ENCODE measurements at regions of chr11 and their contacts with region 1.

Region 1: GRCh38 chr11:63738720-63739360 is 29.7 kb downstream of the ZFTA start:
- DNase-seq: peak; percentile 19
- ATAC-seq: peak; percentile 42; the same call in 2 of the 3 replicates
- H3K4me3 ChIP-seq: no peak overlapping the region
- H3K27ac ChIP-seq: no peak overlapping the region
- H3K4me1 ChIP-seq: no peaks in the 10 kb centered on the region
- H3K27me3 ChIP-seq: no peaks in the 10 kb centered on the region
- CTCF ChIP-seq: peak; percentile 81 to 90 (median 87)
- EP300 ChIP-seq: no peak
- POLR2A ChIP-seq: no peak
- RAD21 ChIP-seq: peak; percentile 73

Region 2: DNA sequence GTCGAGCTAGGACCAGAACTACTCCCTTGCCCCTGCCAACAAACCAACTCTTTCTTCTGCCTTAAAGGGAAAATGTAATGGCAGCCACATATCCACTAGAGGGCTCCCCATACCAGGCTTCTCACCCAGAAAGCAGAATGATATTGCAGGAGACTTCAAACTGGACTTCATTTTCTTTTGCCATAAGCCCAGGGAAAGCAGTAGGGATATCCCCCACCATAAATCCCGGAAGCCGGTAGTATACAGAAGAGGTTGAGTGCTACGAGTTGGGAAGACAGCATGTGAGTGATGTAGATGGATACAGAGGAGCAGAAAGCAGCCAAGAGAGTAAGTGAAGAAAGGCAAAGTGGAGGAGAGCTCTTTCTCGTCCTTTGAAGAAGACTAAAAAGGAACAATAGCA is 259.9 kb before region 1 on chr11:
- CTCF ChIA-PET with region 1: interaction called, 92 read pairs
- POLR2A ChIA-PET with region 1: no interaction called
- RAD21 ChIA-PET with region 1: interaction called, 18 read pairs
- SMC1A ChIA-PET with region 1: interaction called, 46 read pairs
- in situ Hi-C with region 1: loop called (anchors 5 kb)
- intact Hi-C with region 1: loop called (anchors 2 kb)
- DNase-seq: peak; percentile 23
- ATAC-seq: peak; percentile 83
- H3K4me3 ChIP-seq: no peak overlapping the region
- H3K27ac ChIP-seq: no peak overlapping the region
- H3K4me1 ChIP-seq: no peaks in the 10 kb centered on the region
- H3K27me3 ChIP-seq: no peaks in the 10 kb centered on the region
- CTCF ChIP-seq: peak; percentile 83 to 96 (median 89); a peak in 5 of 6 replicates
- EP300 ChIP-seq: no peak
- POLR2A ChIP-seq: no peak
- RAD21 ChIP-seq: peak; percentile 100

Region 3: DNA sequence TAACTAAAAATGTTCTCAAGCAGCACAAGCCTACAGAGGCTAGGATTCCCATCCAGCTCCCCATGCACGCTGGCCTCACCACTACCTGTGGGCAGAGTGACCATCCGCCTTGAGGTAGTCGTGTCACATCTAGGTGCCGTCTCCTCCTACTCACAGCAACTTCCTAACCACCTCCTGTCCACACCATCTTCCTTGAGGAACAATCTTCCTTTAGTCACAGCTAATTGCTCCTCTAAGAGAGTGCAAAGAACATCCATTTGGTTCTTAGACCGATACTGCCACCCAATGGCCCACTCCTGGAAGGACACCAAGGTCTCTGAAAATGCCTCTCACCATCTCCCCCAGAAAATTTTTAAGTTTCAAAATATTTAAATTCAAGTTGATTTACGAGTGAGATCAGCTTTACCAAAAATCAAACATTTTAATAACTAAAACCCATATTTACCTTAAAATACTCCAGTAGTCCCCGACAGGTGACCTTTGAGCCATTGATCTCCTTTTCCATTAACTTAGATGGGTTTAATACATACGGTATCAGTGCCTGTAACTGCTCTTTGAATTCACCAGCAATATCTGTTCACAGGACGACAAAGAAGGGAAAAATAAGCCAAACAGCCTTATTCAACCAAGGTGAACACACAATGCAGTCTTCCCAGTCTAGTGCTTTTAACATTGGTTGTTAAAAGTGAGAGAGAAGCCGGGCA is 102.9 kb before region 1 on chr11:
- CTCF ChIA-PET with region 1: interaction called, 131 read pairs
- POLR2A ChIA-PET with region 1: no interaction called
- RAD21 ChIA-PET with region 1: interaction called, 19 read pairs
- SMC1A ChIA-PET with region 1: interaction called, 30 read pairs
- in situ Hi-C with region 1: no loop called
- intact Hi-C with region 1: loop called (anchors 1 kb)
- DNase-seq: peak; percentile 20
- ATAC-seq: peak; percentile 82
- H3K4me3 ChIP-seq: no peak overlapping the region
- H3K27ac ChIP-seq: no peak overlapping the region
- H3K4me1 ChIP-seq: peaks cover 8% of the 10 kb centered on the region
- H3K27me3 ChIP-seq: no peaks in the 10 kb centered on the region
- CTCF ChIP-seq: peak; percentile 78 to 92 (median 79)
- EP300 ChIP-seq: no peak
- POLR2A ChIP-seq: no peak
- RAD21 ChIP-seq: peak; percentile 98

Region 4: DNA sequence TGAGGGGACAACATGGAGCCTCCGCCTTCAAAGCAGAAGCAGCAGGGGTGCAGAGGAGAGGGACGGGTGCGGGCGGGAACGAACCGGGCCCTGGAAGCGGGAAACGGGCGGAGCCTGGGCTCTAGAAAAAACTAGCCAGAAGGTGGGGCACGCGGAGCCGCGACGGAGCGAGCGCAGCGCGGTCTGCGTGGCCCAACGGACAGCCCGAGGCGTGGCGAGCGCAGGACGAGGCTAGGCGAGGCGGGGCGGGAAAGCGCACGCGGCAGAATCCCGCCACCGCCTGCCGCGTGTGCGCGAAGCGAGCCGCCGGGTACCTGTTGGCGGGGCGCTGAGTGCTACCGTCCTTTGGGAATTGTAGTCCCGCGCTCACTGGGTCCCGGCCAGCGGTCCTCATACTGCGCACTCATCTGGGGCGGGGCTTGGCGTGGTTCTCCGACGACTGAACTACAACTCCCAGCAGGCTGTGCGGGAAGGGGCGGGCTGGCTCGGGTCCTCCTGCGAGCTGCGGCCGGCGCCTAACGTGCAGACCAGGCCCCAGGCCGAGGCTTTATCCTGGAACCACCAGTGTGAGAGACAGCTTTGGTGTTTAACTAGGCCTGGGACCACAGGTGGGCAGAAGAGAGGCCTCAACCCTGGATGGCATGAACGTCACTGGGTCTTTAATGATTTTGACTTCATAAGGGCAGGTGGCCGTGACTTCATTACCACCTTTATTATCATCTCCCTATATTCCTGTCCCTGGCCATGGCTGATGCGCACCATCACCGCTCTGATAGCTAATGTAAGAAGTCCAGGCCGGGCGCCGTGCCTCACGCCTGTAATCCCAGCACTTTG is 67.3 kb before region 1 on chr11 and contains the start of gene ATL3:
- CTCF ChIA-PET with region 1: interaction called, 70 read pairs
- POLR2A ChIA-PET with region 1: interaction called, 3 read pairs
- RAD21 ChIA-PET with region 1: interaction called, 9 read pairs
- SMC1A ChIA-PET with region 1: interaction called, 21 read pairs
- in situ Hi-C with region 1: no loop called
- intact Hi-C with region 1: no loop called
- DNase-seq: peak; percentile 85
- ATAC-seq: peak; percentile 92
- H3K4me3 ChIP-seq: peak within 1 kb of the TSS; percentile 89
- H3K27ac ChIP-seq: peak within 1 kb of the TSS; percentile 81
- H3K4me1 ChIP-seq: peaks cover 8% of the 10 kb centered on the region
- H3K27me3 ChIP-seq: no peaks in the 10 kb centered on the region
- CTCF ChIP-seq: peak in 1 of 3 experiments; percentile 20; a peak in 1 of 6 replicates
- EP300 ChIP-seq: no peak
- POLR2A ChIP-seq: peak; percentile 88
- RAD21 ChIP-seq: no peak
- polyA plus RNA-seq, gene ATL3: 12.0 to 15.4 TPM

Region 5: DNA sequence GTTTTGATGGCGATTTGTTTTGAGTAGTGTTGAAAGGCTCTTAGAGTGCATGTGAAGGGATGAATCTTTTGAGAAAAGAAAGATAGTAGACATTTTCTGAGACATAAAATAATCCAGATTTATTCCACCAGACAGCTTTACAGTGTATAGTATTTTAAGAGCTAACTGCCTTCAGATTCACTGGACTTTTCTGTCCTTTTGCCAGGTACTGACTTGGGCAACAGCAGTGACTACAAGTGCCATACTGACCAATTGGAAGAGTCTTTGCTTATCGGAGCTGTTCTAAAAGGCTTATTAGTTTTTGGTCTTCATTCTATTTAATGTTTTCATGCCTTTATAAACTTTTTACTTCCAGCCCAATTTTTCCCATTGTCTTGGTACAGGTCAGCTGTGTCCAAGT is 25.1 kb before region 1 on chr11:
- CTCF ChIA-PET with region 1: interaction called, 30 read pairs
- POLR2A ChIA-PET with region 1: no interaction called
- RAD21 ChIA-PET with region 1: interaction called, 4 read pairs
- SMC1A ChIA-PET with region 1: interaction called, 3 read pairs
- in situ Hi-C with region 1: no loop called
- intact Hi-C with region 1: no loop called
- DNase-seq: no peak
- ATAC-seq: no peak
- H3K4me3 ChIP-seq: no peak overlapping the region
- H3K27ac ChIP-seq: no peak overlapping the region
- H3K4me1 ChIP-seq: no peaks in the 10 kb centered on the region
- H3K27me3 ChIP-seq: no peaks in the 10 kb centered on the region
- CTCF ChIP-seq: no peak
- EP300 ChIP-seq: no peak
- POLR2A ChIP-seq: no peak
- RAD21 ChIP-seq: no peak

Region 6: DNA sequence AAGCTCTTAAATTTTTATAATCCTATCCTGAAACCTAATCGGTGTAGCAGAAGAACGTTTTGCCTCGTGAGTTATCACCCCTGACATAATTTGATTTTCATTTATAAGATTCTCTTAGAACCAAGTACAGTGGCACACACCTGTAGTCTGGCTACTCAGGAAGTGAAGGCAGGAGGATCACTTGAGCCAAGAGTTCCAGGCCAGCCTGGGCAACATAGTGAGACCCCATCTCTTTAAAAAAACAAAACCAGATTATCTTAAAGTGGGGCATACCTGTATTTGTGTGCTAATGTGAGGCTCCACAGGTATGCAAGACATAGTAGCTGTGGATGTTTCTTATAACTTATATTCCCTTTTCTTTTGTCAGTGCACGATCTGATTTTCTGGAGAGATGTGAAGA is 10.8 kb after region 1 on chr11:
- CTCF ChIA-PET with region 1: interaction called, 11 read pairs
- POLR2A ChIA-PET with region 1: no interaction called
- RAD21 ChIA-PET with region 1: interaction called, 3 read pairs
- SMC1A ChIA-PET with region 1: no interaction called
- in situ Hi-C with region 1: no loop called
- intact Hi-C with region 1: no loop called
- DNase-seq: no peak
- ATAC-seq: no peak
- H3K4me3 ChIP-seq: no peak overlapping the region
- H3K27ac ChIP-seq: no peak overlapping the region
- H3K4me1 ChIP-seq: no peaks in the 10 kb centered on the region
- H3K27me3 ChIP-seq: no peaks in the 10 kb centered on the region
- CTCF ChIP-seq: no peak
- EP300 ChIP-seq: no peak
- POLR2A ChIP-seq: no peak
- RAD21 ChIP-seq: no peak

Region 7: GRCh38 chr11:64196626-64197025 is 457.8 kb after region 1 on chr11:
- CTCF ChIA-PET with region 1: no interaction called
- POLR2A ChIA-PET with region 1: no interaction called
- RAD21 ChIA-PET with region 1: no interaction called
- SMC1A ChIA-PET with region 1: no interaction called
- in situ Hi-C with region 1: no loop called
- intact Hi-C with region 1: no loop called
- DNase-seq: no peak
- ATAC-seq: no peak
- H3K4me3 ChIP-seq: no peak overlapping the region
- H3K27ac ChIP-seq: no peak overlapping the region
- H3K4me1 ChIP-seq: no peaks in the 10 kb centered on the region
- H3K27me3 ChIP-seq: no peaks in the 10 kb centered on the region
- CTCF ChIP-seq: no peak
- EP300 ChIP-seq: no peak
- POLR2A ChIP-seq: no peak
- RAD21 ChIP-seq: no peak

Measured in GM12878 (cell line).